ENCODE measurements at regions of chr6 and their contacts with region 1.

Region 1: GRCh38 chr6:41787219-41787917 is at the start of gene TOMM6:
- DNase-seq: peak; percentile 97
- ATAC-seq: peak; percentile 86
- H3K4me3 Mint-ChIP-seq: peak within 1 kb of the TSS; percentile 93
- H3K27ac Mint-ChIP-seq: peak within 1 kb of the TSS; percentile 98
- H3K4me1 Mint-ChIP-seq: peaks cover 22% of the 10 kb centered on the region
- H3K27me3 Mint-ChIP-seq: peaks cover 8% of the 10 kb centered on the region
- total RNA-seq, gene TOMM6: 215 to 218 TPM

Region 2: DNA sequence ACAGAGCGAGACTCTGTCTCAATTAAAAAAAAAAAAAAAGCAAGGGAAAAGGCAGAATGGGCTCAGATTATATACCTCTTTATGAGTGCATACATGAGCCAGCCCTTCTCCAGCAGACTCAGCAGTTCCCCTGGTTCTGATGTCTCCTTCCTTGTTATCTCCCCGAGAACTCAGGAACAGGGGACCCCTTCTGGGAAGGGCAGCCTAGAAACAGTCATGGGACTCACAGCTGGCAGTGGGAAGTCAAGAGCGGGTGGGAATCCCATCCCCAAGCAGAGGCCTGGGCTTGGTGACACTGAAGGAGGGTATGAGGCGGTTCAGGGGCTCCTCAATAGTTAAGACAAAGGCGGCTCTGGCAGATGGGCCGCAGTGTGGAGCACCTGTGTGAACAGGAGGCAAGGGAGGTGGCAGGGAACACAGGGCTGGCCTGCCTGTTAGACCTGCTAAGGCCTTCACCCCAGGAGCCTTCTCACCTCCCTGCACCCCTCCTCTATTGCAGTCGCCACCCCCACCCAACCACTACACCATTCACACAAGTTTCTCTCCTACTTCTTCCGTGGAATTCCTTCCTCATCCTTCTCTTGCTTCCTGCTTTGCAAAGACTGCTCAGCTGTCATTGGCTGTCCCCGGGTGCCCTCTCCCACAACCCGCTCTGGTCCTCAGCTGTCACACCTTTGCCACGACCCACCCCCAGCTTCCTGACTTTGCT is 178.8 kb before region 1 on chr6:
- CTCF ChIA-PET with region 1: no interaction called
- POLR2A ChIA-PET with region 1: no interaction called
- DNase-seq: no peak
- ATAC-seq: no peak
- H3K4me3 Mint-ChIP-seq: no peak overlapping the region
- H3K27ac Mint-ChIP-seq: no peak overlapping the region
- H3K4me1 Mint-ChIP-seq: no peaks in the 10 kb centered on the region
- H3K27me3 Mint-ChIP-seq: peaks cover 12% of the 10 kb centered on the region

Region 3: GRCh38 chr6:41735427-41736356 is 51.7 kb before region 1 on chr6 and contains the start of gene TFEB:
- CTCF ChIA-PET with region 1: interaction called, 30 read pairs
- POLR2A ChIA-PET with region 1: interaction called, 14 read pairs
- DNase-seq: peak; percentile 95
- ATAC-seq: peak; percentile 69
- H3K4me3 Mint-ChIP-seq: peak within 1 kb of the TSS; percentile 77
- H3K27ac Mint-ChIP-seq: peak within 1 kb of the TSS; percentile 74
- H3K4me1 Mint-ChIP-seq: peaks cover 34% of the 10 kb centered on the region
- H3K27me3 Mint-ChIP-seq: no peaks in the 10 kb centered on the region
- total RNA-seq, gene TFEB: 18.5 to 21.2 TPM

Region 4: DNA sequence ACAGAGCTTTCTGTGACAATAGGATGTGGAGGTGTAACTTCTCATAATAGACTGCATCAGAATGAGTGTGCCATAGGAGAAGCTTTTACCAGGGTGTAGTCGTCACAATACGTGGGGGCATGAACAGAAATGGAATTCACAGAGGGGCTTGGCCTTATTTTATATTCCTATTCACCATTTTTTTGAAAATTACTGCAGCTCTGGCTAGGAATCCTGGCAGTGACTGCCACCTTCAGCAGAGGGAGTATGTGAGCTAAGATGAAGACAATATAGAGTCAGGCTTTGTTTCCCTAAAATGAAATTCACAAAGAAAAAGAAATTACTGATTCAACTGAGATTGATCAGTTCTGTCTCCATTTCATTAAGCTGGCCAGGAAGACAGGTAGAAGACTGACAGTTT is 14.0 kb after region 1 on chr6:
- CTCF ChIA-PET with region 1: interaction called, 15 read pairs
- POLR2A ChIA-PET with region 1: no interaction called
- DNase-seq: no peak
- ATAC-seq: no peak
- H3K4me3 Mint-ChIP-seq: no peak overlapping the region
- H3K27ac Mint-ChIP-seq: no peak overlapping the region
- H3K4me1 Mint-ChIP-seq: peaks cover 2% of the 10 kb centered on the region
- H3K27me3 Mint-ChIP-seq: no peaks in the 10 kb centered on the region

Region 5: GRCh38 chr6:41941280-41942066 is 154.1 kb after region 1 on chr6 and contains the start of gene CCND3:
- CTCF ChIA-PET with region 1: interaction called, 41 read pairs
- POLR2A ChIA-PET with region 1: interaction called, 9 read pairs
- DNase-seq: peak; percentile 93
- ATAC-seq: peak; percentile 80
- H3K4me3 Mint-ChIP-seq: peak within 1 kb of the TSS; percentile 99
- H3K27ac Mint-ChIP-seq: peak within 1 kb of the TSS; percentile 97
- H3K4me1 Mint-ChIP-seq: peaks cover 58% of the 10 kb centered on the region
- H3K27me3 Mint-ChIP-seq: no peaks in the 10 kb centered on the region
- total RNA-seq, gene CCND3: 441 to 462 TPM

Region 6: GRCh38 chr6:42104095-42104806 is 316.9 kb after region 1 on chr6:
- CTCF ChIA-PET with region 1: interaction called, 13 read pairs
- POLR2A ChIA-PET with region 1: no interaction called
- DNase-seq: peak; percentile 82
- ATAC-seq: peak; percentile 94
- H3K4me3 Mint-ChIP-seq: peak overlapping the region; percentile 65
- H3K27ac Mint-ChIP-seq: peak overlapping the region; percentile 74
- H3K4me1 Mint-ChIP-seq: peaks cover 30% of the 10 kb centered on the region
- H3K27me3 Mint-ChIP-seq: peaks cover 2% of the 10 kb centered on the region